Left lung (tissue), 14 donors: ENCODE measurements at regions of chr5 and their contacts with region 1.

Region 1: GRCh38 chr5:38809388-38810359 is 36.1 kb upstream of the OSMR start:
- DNase-seq: peak; percentile 76 to 96 (median 86)
- ATAC-seq: peak; percentile 97
- H3K4me3 ChIP-seq: no peak overlapping the region
- H3K27ac ChIP-seq: no peak overlapping the region
- H3K4me1 ChIP-seq: peaks cover 11 to 19% of the 10 kb centered on the region in 2 donors
- H3K27me3 ChIP-seq: no peaks in the 10 kb centered on the region
- CTCF ChIP-seq: peak; percentile 65 to 82

Region 2: GRCh38 chr5:38441453-38442246 is 368.0 kb before region 1 on chr5:
- intact Hi-C with region 1: loop called (anchors 10 kb)
- DNase-seq: peak in 3 of 4 donors; percentile 78 to 93 (median 87)
- ATAC-seq: peak; percentile 99
- H3K4me3 ChIP-seq: no peak overlapping the region
- H3K27ac ChIP-seq: no peak overlapping the region
- H3K4me1 ChIP-seq: peaks cover 0 to 3% of the 10 kb centered on the region in 2 donors
- H3K27me3 ChIP-seq: peaks cover 0 to 84% of the 10 kb centered on the region in 2 donors
- CTCF ChIP-seq: peak; percentile 89 to 90